Naive thymus-derived CD4-positive, alpha-beta T cell (primary cell): ENCODE measurements at regions of chr19 and their contacts with region 1.

Region 1: DNA sequence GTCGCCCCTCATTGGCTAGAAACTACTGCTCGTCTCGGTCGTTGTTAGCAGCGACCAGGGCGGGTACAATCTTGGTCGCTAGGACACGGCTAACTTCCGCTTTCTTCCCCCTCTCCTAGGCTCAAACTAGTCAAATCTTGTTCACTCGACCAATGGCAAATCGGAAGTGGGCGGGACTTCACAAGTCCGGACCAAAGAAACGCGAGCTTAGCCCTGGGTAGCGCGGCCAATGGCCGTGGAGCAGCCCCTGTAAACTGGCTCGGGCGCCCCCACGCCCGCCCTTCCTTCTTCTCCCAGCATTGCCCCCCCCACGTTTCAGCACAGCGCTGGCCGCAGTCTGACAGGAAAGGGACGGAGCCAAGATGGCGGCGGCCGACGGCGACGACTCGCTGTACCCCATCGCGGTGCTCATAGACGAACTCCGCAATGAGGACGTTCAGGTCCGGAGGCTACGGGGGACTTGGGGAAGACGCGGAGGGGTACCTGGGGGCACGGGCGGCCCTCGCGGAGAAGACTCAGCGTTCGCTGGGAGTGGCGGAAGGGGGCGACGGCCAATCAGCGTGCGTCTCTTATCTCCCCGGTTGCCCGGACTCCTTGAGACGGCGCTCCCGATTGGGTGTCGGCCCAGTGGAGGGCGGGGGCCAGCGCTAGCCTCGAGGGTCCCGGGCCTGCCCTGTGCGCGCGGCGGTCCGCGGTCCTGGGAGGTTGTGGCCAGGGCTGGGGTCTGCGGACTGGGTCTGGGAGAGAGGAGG is at the start of gene PPP2R1A:
- DNase-seq: peak; percentile 97 to 100 (median 99)
- ATAC-seq: peak; percentile 91
- H3K4me3 ChIP-seq: peak within 1 kb of the TSS; percentile 86
- H3K4me3 Mint-ChIP-seq: peak within 1 kb of the TSS; percentile 91 to 99 (median 96)
- H3K27ac ChIP-seq: peak within 1 kb of the TSS; percentile 97
- H3K27ac Mint-ChIP-seq: peak within 1 kb of the TSS; percentile 95 to 100 (median 99)
- H3K4me1 ChIP-seq: peaks cover 34 to 39% of the 10 kb centered on the region in 2 donors
- H3K4me1 Mint-ChIP-seq: peaks cover 29 to 59% (median 46%) of the 10 kb centered on the region in 7 donors
- H3K27me3 ChIP-seq: no peaks in the 10 kb centered on the region
- H3K27me3 Mint-ChIP-seq: no peaks in the 10 kb centered on the region
- total RNA-seq, gene PPP2R1A: 156 to 215 (median 168) TPM

Region 2: DNA sequence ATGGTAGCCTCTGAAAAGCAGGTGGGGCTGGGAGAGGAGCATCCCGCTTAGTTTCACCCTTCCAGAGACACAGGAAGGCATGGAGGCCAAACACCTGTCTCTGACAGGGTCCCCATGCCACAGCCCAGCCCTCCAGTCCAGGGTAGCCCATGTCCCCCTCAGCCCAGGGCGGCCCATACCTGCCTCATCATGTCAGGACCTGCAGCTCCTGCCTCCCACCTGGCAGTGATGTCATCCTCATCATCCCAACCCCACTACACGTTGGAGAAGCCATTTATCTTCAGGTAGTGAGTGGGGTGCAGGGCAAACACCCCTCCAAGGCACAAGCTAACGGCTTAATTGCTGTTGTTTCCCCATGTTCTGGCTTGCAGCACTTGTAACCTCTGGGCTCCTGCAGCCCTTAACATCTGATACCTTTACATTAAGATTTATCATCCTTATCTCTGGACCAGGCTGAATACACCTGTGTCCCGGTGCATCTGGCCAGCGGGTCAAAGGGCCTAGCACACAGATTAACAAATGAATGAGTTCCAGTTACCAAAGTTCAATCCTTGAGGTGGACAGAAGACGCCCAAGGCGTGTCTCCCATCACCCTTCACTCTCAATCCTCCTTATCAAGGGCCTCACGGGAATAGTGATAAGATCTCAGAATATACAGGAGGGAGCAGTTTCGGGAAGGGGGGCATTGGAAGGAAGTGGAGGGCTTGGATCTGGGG is 596.6 kb before region 1 on chr19:
- CTCF ChIA-PET with region 1: no interaction called
- POLR2A ChIA-PET with region 1: no interaction called
- intact Hi-C with region 1: no loop called
- DNase-seq: no peak
- ATAC-seq: no peak
- H3K4me3 ChIP-seq: peak overlapping the region; percentile 88
- H3K4me3 Mint-ChIP-seq: peak overlapping the region; percentile 88 to 99 (median 96)
- H3K27ac ChIP-seq: peak overlapping the region; percentile 66
- H3K27ac Mint-ChIP-seq: peak overlapping the region in 7 of 9 donors; percentile 75 to 97 (median 78)
- H3K4me1 ChIP-seq: peaks cover 6 to 17% of the 10 kb centered on the region in 2 donors
- H3K4me1 Mint-ChIP-seq: peaks cover 19 to 37% (median 24%) of the 10 kb centered on the region in 7 donors
- H3K27me3 ChIP-seq: no peaks in the 10 kb centered on the region
- H3K27me3 Mint-ChIP-seq: peaks cover 0 to 20% (median 15%) of the 10 kb centered on the region in 5 donors

Region 3: GRCh38 chr19:51703575-51704515 is 486.1 kb before region 1 on chr19:
- CTCF ChIA-PET with region 1: no interaction called
- POLR2A ChIA-PET with region 1: no interaction called
- intact Hi-C with region 1: loop called in 1 of 2 experiments (anchors 5 kb)
- DNase-seq: peak; percentile 95 to 98 (median 97)
- ATAC-seq: peak; percentile 98
- H3K4me3 ChIP-seq: peak overlapping the region; percentile 98
- H3K4me3 Mint-ChIP-seq: peak overlapping the region; percentile 82 to 92 (median 90)
- H3K27ac ChIP-seq: peak overlapping the region; percentile 99
- H3K27ac Mint-ChIP-seq: peak overlapping the region; percentile 87 to 95 (median 91)
- H3K4me1 ChIP-seq: peaks cover 3 to 9% of the 10 kb centered on the region in 2 donors
- H3K4me1 Mint-ChIP-seq: peaks cover 29 to 50% (median 43%) of the 10 kb centered on the region in 7 donors
- H3K27me3 ChIP-seq: no peaks in the 10 kb centered on the region
- H3K27me3 Mint-ChIP-seq: peaks cover 0 to 7% (median 0%) of the 10 kb centered on the region in 5 donors

Region 4: DNA sequence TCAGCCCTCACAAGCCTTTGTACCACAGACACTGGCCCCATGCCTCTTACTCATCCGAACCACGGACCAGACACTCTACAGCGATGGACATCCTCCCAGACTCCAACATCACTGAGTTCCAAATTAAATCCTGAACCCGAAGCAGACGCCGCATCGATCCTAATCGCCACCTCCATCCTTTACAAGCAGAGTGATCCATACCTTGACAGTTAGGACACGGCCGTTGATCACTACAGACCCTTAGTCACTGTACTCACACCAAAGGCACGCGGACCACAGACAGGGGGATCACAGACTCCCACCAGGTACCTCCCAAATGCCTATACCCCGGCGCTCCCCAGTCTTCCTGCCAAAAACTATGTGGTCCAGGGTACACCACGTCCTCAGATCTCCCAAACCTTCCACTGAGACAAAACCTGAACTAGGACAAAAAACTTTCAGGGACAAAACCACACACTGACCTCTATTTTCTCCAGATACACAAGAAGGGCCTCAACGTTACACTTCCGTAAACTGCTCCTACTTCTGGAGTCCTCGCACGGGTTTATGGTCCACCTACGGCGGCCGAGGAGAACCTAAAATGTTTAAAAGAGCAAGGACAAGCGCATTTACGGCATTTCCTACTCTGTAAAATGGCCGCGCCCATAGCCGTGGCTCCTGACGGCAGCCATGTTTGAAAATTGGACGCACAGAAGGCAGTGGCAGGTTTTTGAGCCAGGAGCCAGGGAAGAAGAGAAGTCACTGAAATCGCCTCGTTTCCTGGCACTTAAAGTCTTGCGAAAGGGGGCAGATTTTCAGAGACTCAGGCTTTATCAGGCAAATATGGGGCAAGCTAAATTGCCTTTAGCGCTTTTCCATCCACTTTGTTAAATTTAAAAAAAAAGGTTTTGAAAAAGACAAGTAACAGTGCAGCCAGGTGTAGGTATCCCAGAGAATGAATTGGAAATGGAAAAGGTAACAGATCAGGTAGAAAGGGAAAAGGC is 203.3 kb before region 1 on chr19 and contains the start of gene ZNF350:
- CTCF ChIA-PET with region 1: no interaction called
- POLR2A ChIA-PET with region 1: no interaction called
- intact Hi-C with region 1: loop called (anchors 1 to 2 kb)
- DNase-seq: peak; percentile 61 to 94 (median 89)
- ATAC-seq: peak; percentile 100
- H3K4me3 ChIP-seq: peak within 1 kb of the TSS; percentile 89
- H3K4me3 Mint-ChIP-seq: peak within 1 kb of the TSS; percentile 93 to 99 (median 96)
- H3K27ac ChIP-seq: peak within 1 kb of the TSS; percentile 82
- H3K27ac Mint-ChIP-seq: peak within 1 kb of the TSS; percentile 91 to 98 (median 94)
- H3K4me1 ChIP-seq: peaks cover 6 to 10% of the 10 kb centered on the region in 2 donors
- H3K4me1 Mint-ChIP-seq: peaks cover 10 to 33% (median 20%) of the 10 kb centered on the region in 7 donors
- H3K27me3 ChIP-seq: no peaks in the 10 kb centered on the region
- H3K27me3 Mint-ChIP-seq: no peaks in the 10 kb centered on the region
- total RNA-seq, gene ZNF350: 18.1 to 43.7 (median 36.0) TPM

Region 5: DNA sequence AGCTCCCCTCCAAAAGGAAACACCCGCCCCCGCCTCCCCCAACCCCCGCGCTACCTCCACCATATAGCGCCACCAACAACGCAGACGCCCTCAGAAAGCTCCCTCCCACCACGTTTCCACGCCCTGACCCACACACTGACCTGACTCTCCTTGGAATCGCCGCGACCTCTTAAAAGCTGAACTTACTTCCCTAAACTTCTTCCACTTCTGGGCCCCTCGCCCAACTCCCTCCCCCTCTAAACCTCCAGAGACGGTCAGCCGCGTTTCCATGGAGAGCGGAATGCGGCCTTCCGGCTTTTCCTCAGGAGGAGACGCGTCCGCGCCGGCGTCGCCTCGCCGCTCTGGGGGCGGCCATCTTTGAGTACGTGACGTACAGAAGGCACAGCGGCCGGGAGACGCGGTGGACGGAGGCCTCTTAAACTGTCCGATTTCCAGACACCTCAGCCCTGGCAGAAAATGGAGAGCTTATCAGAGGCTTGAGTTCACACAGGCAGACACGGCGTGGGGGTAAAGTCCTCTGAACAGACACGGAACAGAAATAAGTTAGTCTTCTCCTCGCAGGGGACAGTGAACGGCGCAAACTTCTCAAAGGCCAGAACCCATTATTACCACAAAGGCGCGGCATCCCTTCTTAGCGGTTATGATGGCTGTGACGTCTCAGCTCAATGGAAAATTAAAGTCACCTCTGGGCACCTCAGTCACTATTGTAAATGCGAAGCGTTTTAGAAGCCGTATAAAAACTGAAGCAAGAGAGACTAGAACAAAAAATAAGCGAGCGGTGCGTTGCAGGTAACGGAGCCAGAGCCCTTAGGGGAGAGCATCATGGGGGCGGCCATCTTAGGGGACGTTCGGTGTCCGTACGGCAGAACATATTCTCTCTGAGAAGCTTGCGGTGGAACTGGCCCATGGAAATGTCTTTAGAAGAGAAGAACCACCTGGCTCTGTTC is 141.1 kb before region 1 on chr19 and contains the start of gene ZNF432:
- CTCF ChIA-PET with region 1: no interaction called
- POLR2A ChIA-PET with region 1: interaction called, 8 read pairs
- intact Hi-C with region 1: loop called (anchors 1 kb)
- DNase-seq: peak; percentile 75 to 87 (median 82)
- ATAC-seq: peak; percentile 92
- H3K4me3 ChIP-seq: peak within 1 kb of the TSS; percentile 78
- H3K4me3 Mint-ChIP-seq: peak within 1 kb of the TSS; percentile 95 to 100 (median 98)
- H3K27ac ChIP-seq: peak within 1 kb of the TSS; percentile 97
- H3K27ac Mint-ChIP-seq: peak within 1 kb of the TSS; percentile 97 to 99 (median 99)
- H3K4me1 ChIP-seq: peaks cover 0 to 7% of the 10 kb centered on the region in 2 donors
- H3K4me1 Mint-ChIP-seq: peaks cover 10 to 43% (median 25%) of the 10 kb centered on the region in 7 donors
- H3K27me3 ChIP-seq: no peaks in the 10 kb centered on the region
- H3K27me3 Mint-ChIP-seq: no peaks in the 10 kb centered on the region
- total RNA-seq, gene ZNF432: 13.2 to 25.0 (median 18.1) TPM

Region 6: GRCh38 chr19:52237771-52238400 is 48.0 kb after region 1 on chr19:
- CTCF ChIA-PET with region 1: interaction called, 3 read pairs
- POLR2A ChIA-PET with region 1: no interaction called
- intact Hi-C with region 1: loop called (anchors 2 kb)
- DNase-seq: peak in 8 of 9 donors; percentile 26 to 60 (median 50)
- ATAC-seq: peak; percentile 88
- H3K4me3 ChIP-seq: no peak overlapping the region
- H3K4me3 Mint-ChIP-seq: no peak overlapping the region
- H3K27ac ChIP-seq: no peak overlapping the region
- H3K27ac Mint-ChIP-seq: peak overlapping the region in 1 of 9 donors; percentile 26
- H3K4me1 ChIP-seq: no peaks in the 10 kb centered on the region
- H3K4me1 Mint-ChIP-seq: peaks cover 0 to 6% (median 0%) of the 10 kb centered on the region in 7 donors
- H3K27me3 ChIP-seq: no peaks in the 10 kb centered on the region
- H3K27me3 Mint-ChIP-seq: peaks cover 0 to 2% (median 0%) of the 10 kb centered on the region in 5 donors

Region 7: GRCh38 chr19:52527134-52527955 is 337.4 kb after region 1 on chr19 and contains the start of gene ZNF808:
- CTCF ChIA-PET with region 1: no interaction called
- POLR2A ChIA-PET with region 1: no interaction called
- intact Hi-C with region 1: loop called in 1 of 2 experiments (anchors 2 kb)
- DNase-seq: peak; percentile 79 to 95 (median 90)
- ATAC-seq: peak; percentile 99
- H3K4me3 ChIP-seq: peak within 1 kb of the TSS; percentile 99
- H3K4me3 Mint-ChIP-seq: peak within 1 kb of the TSS; percentile 91 to 100 (median 98)
- H3K27ac ChIP-seq: peak within 1 kb of the TSS; percentile 91
- H3K27ac Mint-ChIP-seq: peak within 1 kb of the TSS; percentile 84 to 99 (median 98)
- H3K4me1 ChIP-seq: peaks cover 9 to 12% of the 10 kb centered on the region in 2 donors
- H3K4me1 Mint-ChIP-seq: peaks cover 18 to 34% (median 25%) of the 10 kb centered on the region in 7 donors
- H3K27me3 ChIP-seq: no peaks in the 10 kb centered on the region
- H3K27me3 Mint-ChIP-seq: no peaks in the 10 kb centered on the region
- total RNA-seq, gene ZNF808: 17.7 to 52.4 (median 33.7) TPM

Region 8: DNA sequence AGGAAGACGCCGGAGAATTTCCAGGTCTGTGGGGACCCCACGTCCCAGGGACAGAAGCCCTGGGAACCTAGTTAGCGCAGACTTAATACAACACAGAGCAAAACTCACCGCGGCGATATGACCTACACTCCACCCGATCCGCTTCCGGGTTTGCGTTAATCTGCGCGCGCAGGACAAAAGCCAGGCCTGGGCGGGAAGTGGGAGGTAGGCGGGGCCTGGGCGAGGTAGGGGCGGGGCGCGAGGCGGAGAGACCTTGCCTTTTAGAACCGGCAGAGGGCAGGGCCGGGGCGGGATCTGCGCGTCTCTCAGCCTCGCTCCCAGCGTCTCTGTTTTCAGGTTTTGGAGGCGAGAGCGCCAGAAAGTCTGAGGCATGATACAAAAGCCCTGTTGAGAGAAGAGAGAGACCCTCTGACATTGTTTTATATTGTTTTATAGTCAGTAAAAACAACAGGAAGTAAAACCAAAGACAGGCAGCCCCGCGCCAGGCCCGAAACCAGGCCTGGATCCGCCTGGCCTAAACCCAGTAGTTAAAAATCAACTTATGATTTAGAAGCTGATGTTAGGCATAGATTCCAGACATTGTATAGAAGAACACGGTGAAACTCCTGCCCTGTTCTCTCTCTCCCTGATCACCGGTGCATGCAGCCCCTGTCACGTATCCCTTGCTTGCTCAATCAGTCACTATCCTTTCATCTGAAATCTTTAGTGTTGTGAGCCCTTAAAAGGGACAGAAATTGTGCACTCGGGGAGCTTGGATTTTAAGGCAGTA is 545.2 kb after region 1 on chr19 and contains the start of gene ZNF611:
- CTCF ChIA-PET with region 1: no interaction called
- POLR2A ChIA-PET with region 1: no interaction called
- intact Hi-C with region 1: loop called in 1 of 2 experiments (anchors 1 kb)
- DNase-seq: peak; percentile 97 to 100 (median 98)
- ATAC-seq: peak; percentile 98
- H3K4me3 ChIP-seq: peak within 1 kb of the TSS; percentile 99
- H3K4me3 Mint-ChIP-seq: peak within 1 kb of the TSS; percentile 85 to 96 (median 93)
- H3K27ac ChIP-seq: peak within 1 kb of the TSS; percentile 95
- H3K27ac Mint-ChIP-seq: peak within 1 kb of the TSS; percentile 92 to 98 (median 95)
- H3K4me1 ChIP-seq: peaks cover 0 to 8% of the 10 kb centered on the region in 2 donors
- H3K4me1 Mint-ChIP-seq: peaks cover 14 to 32% (median 24%) of the 10 kb centered on the region in 7 donors
- H3K27me3 ChIP-seq: no peaks in the 10 kb centered on the region
- H3K27me3 Mint-ChIP-seq: no peaks in the 10 kb centered on the region
- total RNA-seq, gene ZNF611: 23.4 to 56.0 (median 36.8) TPM